Activated naive CD4-positive, alpha-beta T cell treated with anti-CD3 and anti-CD28 coated beads for 36 hours (primary cell): ENCODE measurements at regions of chr6 and their contacts with region 1.

Region 1: DNA sequence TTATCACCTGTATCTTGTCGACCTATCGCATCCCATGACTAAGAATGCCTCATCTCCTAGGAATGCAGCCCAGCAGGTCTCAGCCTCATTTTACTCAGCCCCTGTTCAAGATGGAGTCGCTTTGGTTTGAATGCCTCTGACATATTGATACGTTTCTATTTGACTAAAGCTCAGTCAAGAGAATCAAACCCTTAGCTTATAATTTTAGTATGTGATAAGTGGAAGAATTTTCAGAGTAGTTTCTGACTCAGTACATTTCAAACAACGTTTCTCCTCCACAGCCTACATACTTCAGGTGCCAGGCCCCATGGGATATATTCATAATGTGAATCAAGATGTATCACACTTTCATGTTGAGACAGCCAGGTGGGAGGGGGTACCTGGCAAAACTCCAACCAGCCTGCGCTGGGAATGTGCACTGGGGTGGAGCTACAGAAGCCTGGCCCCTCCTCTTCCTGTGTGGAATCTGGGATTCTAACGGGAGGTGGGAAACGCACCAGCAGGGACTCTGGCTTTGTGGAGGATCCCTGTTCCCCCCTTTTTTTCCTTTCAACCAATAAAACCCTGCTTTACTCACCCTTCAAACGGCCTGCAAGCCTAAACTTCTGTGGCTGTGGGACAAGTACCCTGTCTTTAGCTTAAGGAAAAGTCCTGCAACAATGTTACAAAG is 6.8 kb upstream of the SEC63 start:
- DNase-seq: peak; percentile 90
- H3K4me3 Mint-ChIP-seq: no peak overlapping the region
- H3K27ac Mint-ChIP-seq: peak overlapping the region; percentile 92
- H3K4me1 Mint-ChIP-seq: peaks cover 21% of the 10 kb centered on the region
- H3K27me3 Mint-ChIP-seq: no peaks in the 10 kb centered on the region

Region 2: DNA sequence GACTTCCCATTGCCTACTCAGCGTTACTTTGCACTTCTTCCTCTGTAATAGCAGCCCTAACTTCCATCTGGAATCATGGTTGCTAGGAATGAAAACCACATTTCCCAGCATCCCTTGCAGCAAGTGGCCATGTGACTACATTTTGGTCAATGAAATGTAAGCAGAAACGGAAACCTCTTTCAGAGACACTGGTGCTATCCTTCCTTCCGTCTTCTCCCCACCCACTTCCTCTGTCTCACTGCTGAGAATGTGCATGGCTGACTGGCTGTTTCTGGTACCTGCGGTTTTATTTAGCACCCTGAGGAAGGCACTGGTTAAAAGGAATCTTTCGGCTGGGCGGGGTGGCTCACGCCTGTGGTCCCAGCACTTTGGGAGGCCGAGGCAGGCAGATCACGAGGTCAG is 248.1 kb before region 1 on chr6:
- CTCF ChIA-PET with region 1: no interaction called
- intact Hi-C with region 1: loop called (anchors 1 kb)
- DNase-seq: peak; percentile 89
- H3K4me3 Mint-ChIP-seq: peak overlapping the region; percentile 71
- H3K27ac Mint-ChIP-seq: peak overlapping the region; percentile 93
- H3K4me1 Mint-ChIP-seq: peaks cover 65% of the 10 kb centered on the region
- H3K27me3 Mint-ChIP-seq: no peaks in the 10 kb centered on the region

Region 3: DNA sequence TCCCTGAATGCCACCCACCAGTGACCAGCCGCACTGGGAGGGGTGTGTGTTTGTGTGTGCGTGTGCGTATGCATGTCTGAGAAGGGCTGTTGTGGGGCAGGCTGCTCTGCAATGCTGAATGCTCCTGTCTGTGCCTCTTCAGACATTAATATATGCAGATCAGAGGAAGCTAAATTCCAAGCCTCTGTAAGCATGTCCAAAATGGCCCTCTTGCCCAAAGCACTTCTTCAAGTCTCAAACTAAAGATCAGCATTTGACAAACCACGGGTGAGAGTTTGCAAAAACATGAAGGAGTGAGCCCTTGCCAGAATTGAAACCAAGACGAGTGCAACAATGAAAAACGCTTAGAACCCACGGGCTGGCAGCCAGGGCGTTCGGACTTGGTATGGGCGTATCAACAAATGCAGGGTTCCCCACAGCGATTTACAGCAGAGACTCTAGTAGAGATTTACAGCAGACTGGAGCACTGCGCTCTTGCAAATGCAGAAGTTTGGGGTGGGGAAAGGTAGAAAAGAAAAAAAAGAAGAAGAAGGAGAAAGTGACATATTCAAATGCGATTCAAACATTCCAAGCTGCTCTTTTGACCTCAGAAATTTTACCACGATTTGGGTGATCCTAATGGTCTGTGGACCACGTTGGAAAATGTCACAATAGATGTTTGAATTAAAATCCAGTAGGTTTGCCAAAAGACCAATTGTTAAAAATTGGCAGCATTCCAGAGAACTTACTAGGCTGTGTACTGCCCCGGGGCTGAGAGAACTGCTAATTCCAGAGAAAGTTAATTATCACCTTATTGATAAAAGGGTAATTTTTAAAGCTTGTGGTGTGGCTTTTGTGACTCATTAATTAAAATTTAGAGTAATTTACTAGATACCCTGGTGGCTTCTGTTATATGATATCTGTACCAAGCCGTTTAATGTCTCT is 144.2 kb before region 1 on chr6:
- CTCF ChIA-PET with region 1: no interaction called
- intact Hi-C with region 1: loop called (anchors 1 kb)
- DNase-seq: peak; percentile 55
- H3K4me3 Mint-ChIP-seq: peak overlapping the region; percentile 88
- H3K27ac Mint-ChIP-seq: peak overlapping the region; percentile 98
- H3K4me1 Mint-ChIP-seq: peaks cover 83% of the 10 kb centered on the region
- H3K27me3 Mint-ChIP-seq: no peaks in the 10 kb centered on the region

Region 4: GRCh38 chr6:108068618-108069017 is 103.8 kb after region 1 on chr6:
- CTCF ChIA-PET with region 1: no interaction called
- intact Hi-C with region 1: loop called (anchors 1 kb)
- DNase-seq: peak; percentile 74
- H3K4me3 Mint-ChIP-seq: no peak overlapping the region
- H3K27ac Mint-ChIP-seq: no peak overlapping the region
- H3K4me1 Mint-ChIP-seq: peaks cover 16% of the 10 kb centered on the region
- H3K27me3 Mint-ChIP-seq: no peaks in the 10 kb centered on the region

Region 5: DNA sequence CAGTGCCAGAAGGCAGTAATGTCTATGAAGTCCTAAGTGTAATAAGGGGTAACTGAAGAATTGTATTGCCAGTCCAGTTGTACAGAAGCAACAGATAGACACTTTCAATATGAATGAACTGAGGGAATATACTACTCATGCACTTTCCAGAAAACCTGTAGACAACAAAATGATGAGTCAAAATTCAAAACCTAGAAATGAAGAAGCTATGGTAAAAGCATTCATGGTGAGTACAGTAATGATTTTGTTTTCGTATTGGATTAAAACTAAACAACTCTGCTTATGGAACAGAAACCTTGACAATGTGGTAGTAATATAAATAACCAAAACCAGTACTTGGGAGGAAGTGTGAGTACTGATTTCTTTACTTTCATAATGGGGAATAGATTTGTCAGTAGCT is 918.4 kb after region 1 on chr6:
- CTCF ChIA-PET with region 1: no interaction called
- intact Hi-C with region 1: loop called (anchors 1 kb)
- DNase-seq: no peak
- H3K4me3 Mint-ChIP-seq: no peak overlapping the region
- H3K27ac Mint-ChIP-seq: no peak overlapping the region
- H3K4me1 Mint-ChIP-seq: peaks cover 22% of the 10 kb centered on the region
- H3K27me3 Mint-ChIP-seq: peaks cover 13% of the 10 kb centered on the region